H1 (cell line): ENCODE measurements at regions of chr11 and their contacts with region 1.

Region 1: DNA sequence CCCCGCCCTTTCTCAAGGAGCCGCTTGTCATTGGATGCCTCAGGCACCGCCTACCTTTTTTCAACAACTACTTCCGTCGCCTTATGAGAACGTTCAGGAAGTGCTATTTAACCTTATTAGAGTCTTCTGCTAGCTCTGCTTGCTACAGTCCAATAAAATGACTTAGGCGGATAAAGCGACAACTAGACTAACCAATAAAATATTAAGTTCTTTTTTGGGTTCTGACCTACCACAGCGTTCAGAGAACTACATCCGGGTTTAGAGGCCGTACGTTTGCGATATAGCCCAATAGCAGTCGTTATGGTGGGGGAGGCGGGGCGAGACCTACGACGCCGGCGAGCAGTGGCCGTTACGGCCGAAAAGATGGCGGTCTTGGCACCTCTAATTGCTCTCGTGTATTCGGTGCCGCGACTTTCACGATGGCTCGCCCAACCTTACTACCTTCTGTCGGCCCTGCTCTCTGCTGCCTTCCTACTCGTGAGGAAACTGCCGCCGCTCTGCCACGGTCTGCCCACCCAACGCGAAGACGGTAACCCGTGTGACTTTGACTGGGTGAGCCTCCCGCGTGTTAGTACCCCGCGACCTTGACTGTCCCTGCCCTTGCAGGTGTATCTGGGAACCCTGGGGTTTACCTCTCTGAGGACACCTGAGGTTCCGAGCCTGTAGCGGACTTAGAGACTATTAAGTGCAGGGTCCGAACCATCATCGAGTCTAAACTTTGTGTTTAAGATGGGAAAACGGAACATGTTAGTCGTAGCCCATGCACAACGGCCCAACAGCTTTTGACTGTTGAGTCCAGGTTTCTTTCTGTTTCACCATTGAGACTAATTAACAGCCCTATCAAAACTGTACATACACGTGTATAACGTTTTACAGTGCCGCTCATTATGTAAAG is at the start of gene TMX2:
- DNase-seq: peak; percentile 82 to 90
- H3K4me3 ChIP-seq: peak within 1 kb of the TSS; percentile 91 to 100 (median 98)
- H3K27ac ChIP-seq: peak within 1 kb of the TSS; percentile 94
- H3K4me1 ChIP-seq: peaks cover 0 to 4% (median 0%) of the 10 kb centered on the region in 4 experiments; a peak in 1 of 7 replicates
- H3K27me3 ChIP-seq: no peaks in the 10 kb centered on the region
- CTCF ChIP-seq: no peak
- EP300 ChIP-seq: no peak
- POLR2A ChIP-seq: peak; percentile 80 to 87
- RAD21 ChIP-seq: no peak
- total RNA-seq, gene TMX2: 100.0 and 104 TPM in 2 replicates

Region 2: GRCh38 chr11:57698843-57699365 is 13.6 kb before region 1 on chr11:
- CTCF ChIA-PET with region 1: interaction called, 4 read pairs
- POLR2A ChIA-PET with region 1: interaction called, 12 read pairs
- DNase-seq: no peak
- H3K4me3 ChIP-seq: no peak overlapping the region
- H3K27ac ChIP-seq: no peak overlapping the region
- H3K4me1 ChIP-seq: no peaks in the 10 kb centered on the region
- H3K27me3 ChIP-seq: no peaks in the 10 kb centered on the region
- CTCF ChIP-seq: no peak
- EP300 ChIP-seq: no peak
- POLR2A ChIP-seq: no peak
- RAD21 ChIP-seq: no peak

Region 3: DNA sequence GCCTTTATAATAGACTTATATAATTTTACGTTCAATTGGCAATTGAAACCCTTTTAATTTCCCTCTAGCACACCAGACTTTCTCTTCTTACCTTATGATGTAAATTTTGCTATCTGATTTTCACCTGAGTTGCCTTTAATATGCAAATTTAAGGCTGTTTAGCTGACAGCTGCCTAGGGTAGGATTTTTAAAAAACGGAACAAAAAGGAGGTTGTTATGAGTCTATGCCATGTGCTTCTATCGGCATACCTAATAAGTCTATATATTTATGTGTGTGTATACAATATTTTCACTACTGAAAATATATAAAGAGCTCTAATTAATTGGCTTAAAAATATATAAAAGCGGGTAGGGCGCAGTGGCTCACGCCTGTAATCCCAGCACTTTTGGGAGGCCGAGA is 17.0 kb after region 1 on chr11:
- CTCF ChIA-PET with region 1: no interaction called
- POLR2A ChIA-PET with region 1: interaction called, 27 read pairs
- DNase-seq: no peak
- H3K4me3 ChIP-seq: no peak overlapping the region
- H3K27ac ChIP-seq: no peak overlapping the region
- H3K4me1 ChIP-seq: peaks cover 0 to 3% (median 1%) of the 10 kb centered on the region in 4 experiments; a peak in 2 of 7 replicates
- H3K27me3 ChIP-seq: no peaks in the 10 kb centered on the region
- CTCF ChIP-seq: no peak
- EP300 ChIP-seq: no peak
- POLR2A ChIP-seq: no peak
- RAD21 ChIP-seq: no peak

Region 4: DNA sequence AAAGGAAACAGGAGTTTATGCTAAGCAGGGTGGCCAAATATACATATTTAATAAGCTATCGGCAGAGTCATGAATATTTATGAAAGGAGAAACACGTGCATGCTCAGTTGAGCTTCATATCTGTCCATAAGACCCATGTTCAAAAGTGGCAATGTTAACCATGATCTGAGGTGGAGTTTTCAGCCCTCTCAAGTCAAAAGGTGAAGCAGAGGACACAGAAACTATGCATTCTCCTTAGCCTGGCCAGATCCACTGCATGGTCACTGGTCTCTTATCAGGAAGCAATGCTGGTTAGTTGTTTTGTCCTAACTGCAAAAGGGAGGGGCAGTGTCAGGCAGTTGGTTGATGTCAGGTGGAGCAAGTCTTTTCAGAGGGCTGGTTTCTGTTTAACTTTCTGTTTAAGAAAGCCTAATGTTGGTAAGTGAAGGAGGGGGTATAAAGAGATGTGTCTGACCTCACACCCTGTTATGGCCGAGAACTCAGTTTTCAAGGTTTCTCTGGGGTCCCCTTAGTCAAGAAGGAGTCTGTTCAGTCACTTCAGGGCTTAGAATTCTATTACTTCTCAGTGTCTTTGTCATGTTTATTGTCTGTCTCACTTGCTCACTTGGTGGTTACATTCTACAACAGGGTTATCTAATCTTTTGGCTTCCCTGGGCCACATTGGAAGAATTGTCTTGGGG is 23.3 kb after region 1 on chr11:
- CTCF ChIA-PET with region 1: interaction called, 3 read pairs
- POLR2A ChIA-PET with region 1: interaction called, 10 read pairs
- DNase-seq: no peak
- H3K4me3 ChIP-seq: no peak overlapping the region
- H3K27ac ChIP-seq: no peak overlapping the region
- H3K4me1 ChIP-seq: peaks cover 0 to 10% (median 2%) of the 10 kb centered on the region in 4 experiments; a peak in 3 of 7 replicates
- H3K27me3 ChIP-seq: no peaks in the 10 kb centered on the region
- CTCF ChIP-seq: no peak
- EP300 ChIP-seq: no peak
- POLR2A ChIP-seq: no peak
- RAD21 ChIP-seq: no peak